ENCODE measurements at regions of chr2 and their contacts with region 1.

Region 1: DNA sequence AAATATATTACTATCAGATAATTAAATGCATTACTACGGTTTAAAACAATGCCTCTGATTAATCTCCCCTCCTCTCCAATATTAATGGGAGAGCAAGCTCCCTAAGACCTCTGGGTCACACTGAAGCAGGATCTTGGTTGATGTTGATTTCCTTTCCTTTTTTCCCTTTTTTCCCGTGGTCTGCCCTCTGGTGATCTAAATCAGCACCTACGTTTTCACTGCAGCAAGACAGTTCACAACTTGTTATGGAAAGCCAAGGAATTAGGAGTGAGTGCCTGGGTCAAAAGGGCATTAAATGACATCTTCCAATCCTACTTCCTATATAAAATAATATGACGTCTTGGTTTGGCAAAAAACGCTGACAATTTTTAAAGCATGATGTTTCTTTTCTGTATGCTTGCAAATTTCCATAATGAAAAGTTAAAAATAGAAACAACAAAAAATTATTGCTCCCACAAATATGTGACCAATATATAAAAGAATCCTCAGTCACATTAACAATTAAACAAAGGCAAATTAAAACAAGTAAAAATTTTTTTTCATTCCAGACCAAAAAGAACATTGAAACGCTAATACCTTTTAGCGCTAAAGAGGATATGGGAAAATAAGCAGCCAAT is 7.9 kb upstream of the CFAP36 start:
- DNase-seq: no peak
- H3K4me3 ChIP-seq: no peak overlapping the region
- H3K4me3 Mint-ChIP-seq: no peak overlapping the region
- H3K27ac ChIP-seq: no peak overlapping the region
- H3K27ac Mint-ChIP-seq: peak overlapping the region in 1 of 8 donors; percentile 46
- H3K4me1 ChIP-seq: no peaks in the 10 kb centered on the region
- H3K4me1 Mint-ChIP-seq: peaks cover 0 to under 1% (median 0%) of the 10 kb centered on the region in 3 donors
- H3K27me3 ChIP-seq: no peaks in the 10 kb centered on the region
- H3K27me3 Mint-ChIP-seq: peaks cover 0 to 4% of the 10 kb centered on the region in 2 donors

Region 2: GRCh38 chr2:55033066-55033742 is 478.4 kb before region 1 on chr2:
- CTCF ChIA-PET with region 1: no interaction called
- POLR2A ChIA-PET with region 1: interaction called, 11 read pairs
- DNase-seq: peak in 1 of 5 donors; percentile 29
- H3K4me3 ChIP-seq: no peak overlapping the region
- H3K4me3 Mint-ChIP-seq: peak overlapping the region in 2 of 7 donors; percentile 0 to 19
- H3K27ac ChIP-seq: no peak overlapping the region
- H3K27ac Mint-ChIP-seq: peak overlapping the region in 1 of 8 donors; percentile 64
- H3K4me1 ChIP-seq: peaks cover 45% of the 10 kb centered on the region
- H3K4me1 Mint-ChIP-seq: peaks cover 71 to 75% (median 74%) of the 10 kb centered on the region in 3 donors
- H3K27me3 ChIP-seq: no peaks in the 10 kb centered on the region
- H3K27me3 Mint-ChIP-seq: no peaks in the 10 kb centered on the region

Region 3: DNA sequence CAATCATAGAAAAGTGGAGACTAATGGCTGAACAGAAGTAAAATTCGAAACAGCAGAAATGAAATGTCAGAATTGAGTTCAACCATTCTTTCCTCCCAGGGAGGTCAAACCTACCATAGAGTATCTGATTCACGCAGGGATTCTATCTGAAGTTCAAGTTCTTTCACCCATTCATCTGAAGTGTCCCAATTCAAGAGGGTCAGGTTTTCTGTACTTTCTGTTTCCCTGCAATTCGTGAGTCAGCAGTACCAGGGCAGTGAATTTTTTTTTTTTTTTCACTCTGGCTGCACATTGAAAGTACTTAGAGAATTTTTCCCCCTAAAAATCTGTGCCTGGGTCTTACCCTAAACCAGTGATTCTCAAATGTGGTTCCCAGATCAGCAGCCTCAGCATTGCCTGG is 51.1 kb before region 1 on chr2:
- CTCF ChIA-PET with region 1: no interaction called
- POLR2A ChIA-PET with region 1: no interaction called
- DNase-seq: no peak
- H3K4me3 ChIP-seq: no peak overlapping the region
- H3K4me3 Mint-ChIP-seq: no peak overlapping the region
- H3K27ac ChIP-seq: no peak overlapping the region
- H3K27ac Mint-ChIP-seq: no peak overlapping the region
- H3K4me1 ChIP-seq: no peaks in the 10 kb centered on the region
- H3K4me1 Mint-ChIP-seq: no peaks in the 10 kb centered on the region
- H3K27me3 ChIP-seq: no peaks in the 10 kb centered on the region
- H3K27me3 Mint-ChIP-seq: peaks cover 11 to 51% of the 10 kb centered on the region in 2 donors